HCT116 (cell line): ENCODE measurements at regions of chr9 and their contacts with region 1.

Region 1: DNA sequence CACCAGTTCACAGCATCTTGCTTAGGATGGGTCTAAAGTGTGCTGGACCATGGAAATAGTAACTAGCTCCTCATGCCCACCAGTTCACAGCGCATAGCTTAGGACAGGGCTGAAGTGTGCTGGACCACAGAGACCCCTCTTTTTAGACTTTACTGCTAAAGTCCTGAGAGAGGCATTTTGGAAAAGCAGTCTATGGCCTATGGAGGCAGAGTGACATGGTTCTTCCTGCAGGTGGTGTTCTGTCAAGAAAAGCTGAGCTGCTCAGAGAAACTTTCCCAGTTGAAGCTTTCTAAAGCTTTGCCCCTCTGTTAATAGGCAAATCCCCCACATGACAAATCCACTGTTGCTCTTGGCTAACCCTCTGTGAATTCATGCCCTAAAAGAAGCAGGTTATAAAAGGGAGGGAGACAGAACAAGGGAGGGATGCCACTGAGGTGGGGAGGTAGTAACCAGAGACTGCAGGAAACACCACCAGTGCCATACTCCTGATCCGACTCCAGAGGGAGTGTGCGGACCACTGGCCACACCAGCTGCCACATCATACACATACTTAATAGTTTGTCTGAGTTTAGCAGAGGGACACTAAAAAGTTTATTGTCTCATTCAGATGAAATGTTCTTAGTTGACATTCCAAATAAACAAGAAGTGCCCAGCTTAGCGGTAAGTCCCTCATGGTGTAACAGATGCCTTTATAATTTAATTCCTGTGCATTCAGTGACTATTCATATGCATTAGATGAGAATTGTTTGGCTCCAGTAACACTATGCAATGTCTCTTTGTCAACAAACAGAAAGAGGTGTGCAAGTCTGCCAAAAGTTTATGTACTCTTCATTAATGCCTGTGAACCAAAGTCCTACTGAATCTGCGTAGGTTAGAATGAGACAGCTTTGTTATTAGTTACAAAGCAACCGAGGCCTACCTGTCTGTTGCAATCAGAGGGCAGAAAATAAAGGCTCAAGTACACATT is 236.2 kb upstream of the NFIL3 start:
- DNase-seq: peak; percentile 12
- ATAC-seq: peak; percentile 99
- H3K4me3 ChIP-seq: no peak overlapping the region
- H3K27ac ChIP-seq: no peak overlapping the region
- H3K4me1 ChIP-seq: no peaks in the 10 kb centered on the region
- H3K27me3 ChIP-seq: no peaks in the 10 kb centered on the region
- CTCF ChIP-seq: peak; percentile 29 to 61 (median 55); a peak in 5 of 6 replicates
- POLR2A ChIP-seq: no peak
- RAD21 ChIP-seq: peak; percentile 64

Region 2: DNA sequence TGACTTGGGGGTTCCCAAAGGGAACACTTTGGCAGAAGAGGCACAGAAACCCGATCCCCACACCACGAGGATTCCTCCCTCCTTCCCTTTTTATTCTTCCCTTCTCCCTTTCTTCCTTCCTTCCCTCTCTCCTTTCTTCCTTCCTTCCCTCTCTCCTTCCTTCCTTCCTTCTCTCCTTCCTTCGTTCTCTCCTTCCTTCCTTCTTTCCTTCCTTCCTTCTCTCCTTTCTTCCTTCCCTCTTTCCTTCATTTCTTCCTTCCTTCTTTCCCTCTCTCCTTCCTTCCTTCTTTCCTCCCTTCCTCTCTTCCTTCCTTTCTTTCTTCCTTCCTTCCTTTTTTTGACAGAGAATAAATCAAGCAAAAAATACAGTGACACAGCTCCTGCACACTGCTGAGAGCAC is 68.2 kb before region 1 on chr9:
- CTCF ChIA-PET with region 1: no interaction called
- POLR2A ChIA-PET with region 1: no interaction called
- RAD21 ChIA-PET with region 1: no interaction called
- intact Hi-C with region 1: loop called (anchors 10 kb)
- DNase-seq: no peak
- ATAC-seq: no peak
- H3K4me3 ChIP-seq: no peak overlapping the region
- H3K27ac ChIP-seq: no peak overlapping the region
- H3K4me1 ChIP-seq: no peaks in the 10 kb centered on the region
- H3K27me3 ChIP-seq: no peaks in the 10 kb centered on the region
- CTCF ChIP-seq: no peak
- POLR2A ChIP-seq: no peak
- RAD21 ChIP-seq: no peak

Region 3: DNA sequence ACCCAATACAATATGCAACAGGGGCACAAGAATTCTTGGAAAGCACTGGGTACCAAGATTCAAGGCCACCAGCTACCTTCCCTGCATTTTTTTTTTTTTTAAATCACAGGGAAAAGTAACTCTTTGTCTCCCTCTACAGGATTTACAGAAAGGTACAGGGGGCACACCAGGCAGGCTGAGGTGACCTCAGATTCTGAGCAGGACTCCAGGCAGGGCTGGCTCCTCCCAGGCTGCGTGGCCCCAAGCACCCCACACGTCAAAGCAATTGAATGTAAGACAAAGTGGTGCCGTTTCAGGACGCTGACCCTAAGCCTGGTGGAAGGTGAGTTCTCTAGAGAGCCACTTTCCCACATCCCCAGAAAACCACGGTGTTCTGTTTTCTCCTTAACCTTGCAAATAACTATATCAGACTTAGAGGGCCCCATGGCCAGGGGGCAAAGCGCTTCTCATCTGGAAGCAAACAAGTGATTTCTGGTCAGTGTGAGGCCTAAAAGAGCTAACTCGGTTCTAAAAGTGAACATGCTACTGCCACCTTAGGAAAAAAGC is 67.6 kb after region 1 on chr9:
- CTCF ChIA-PET with region 1: interaction called, 5 read pairs
- POLR2A ChIA-PET with region 1: no interaction called
- RAD21 ChIA-PET with region 1: no interaction called
- intact Hi-C with region 1: loop called (anchors 1 kb)
- DNase-seq: peak; percentile 16
- ATAC-seq: peak; percentile 100
- H3K4me3 ChIP-seq: no peak overlapping the region
- H3K27ac ChIP-seq: no peak overlapping the region
- H3K4me1 ChIP-seq: peaks cover 0 to 4% of the 10 kb centered on the region in 2 experiments; a peak in 2 of 4 replicates
- H3K27me3 ChIP-seq: no peaks in the 10 kb centered on the region
- CTCF ChIP-seq: peak; percentile 67 to 79 (median 68); a peak in 5 of 6 replicates
- POLR2A ChIP-seq: no peak
- RAD21 ChIP-seq: peak; percentile 76

Region 4: GRCh38 chr9:92180669-92181181 is 520.9 kb after region 1 on chr9:
- CTCF ChIA-PET with region 1: no interaction called
- POLR2A ChIA-PET with region 1: no interaction called
- RAD21 ChIA-PET with region 1: no interaction called
- intact Hi-C with region 1: no loop called
- DNase-seq: no peak
- ATAC-seq: no peak
- H3K4me3 ChIP-seq: no peak overlapping the region
- H3K27ac ChIP-seq: no peak overlapping the region
- H3K4me1 ChIP-seq: peaks cover 0 to 4% of the 10 kb centered on the region in 2 experiments; a peak in 1 of 4 replicates
- H3K27me3 ChIP-seq: no peaks in the 10 kb centered on the region
- CTCF ChIP-seq: no peak
- POLR2A ChIP-seq: no peak
- RAD21 ChIP-seq: no peak